ENCODE measurements at regions of chr3 and their contacts with region 1.

Region 1: GRCh38 chr3:136437043-136437442 is 186.9 kb downstream of the PCCB start:
- DNase-seq: no peak
- H3K4me3 ChIP-seq: no peak overlapping the region
- H3K27ac ChIP-seq: no peak overlapping the region
- H3K4me1 ChIP-seq: no peaks in the 10 kb centered on the region
- H3K27me3 ChIP-seq: no peaks in the 10 kb centered on the region
- CTCF ChIP-seq: no peak

Region 2: GRCh38 chr3:136366289-136366688 is 70.8 kb before region 1 on chr3:
- CTCF ChIA-PET with region 1: no interaction called
- POLR2A ChIA-PET with region 1: no interaction called
- intact Hi-C with region 1: no loop called
- DNase-seq: no peak
- H3K4me3 ChIP-seq: no peak overlapping the region
- H3K27ac ChIP-seq: no peak overlapping the region
- H3K4me1 ChIP-seq: no peaks in the 10 kb centered on the region
- H3K27me3 ChIP-seq: no peaks in the 10 kb centered on the region
- CTCF ChIP-seq: no peak

Region 3: GRCh38 chr3:136404056-136404455 is 33.0 kb before region 1 on chr3:
- CTCF ChIA-PET with region 1: no interaction called
- POLR2A ChIA-PET with region 1: interaction called, 28 read pairs
- intact Hi-C with region 1: no loop called
- DNase-seq: no peak
- H3K4me3 ChIP-seq: no peak overlapping the region
- H3K27ac ChIP-seq: no peak overlapping the region
- H3K4me1 ChIP-seq: no peaks in the 10 kb centered on the region
- H3K27me3 ChIP-seq: no peaks in the 10 kb centered on the region
- CTCF ChIP-seq: no peak